PC-9 (cell line): ENCODE measurements at regions of chr1 and their contacts with region 1.

Region 1: DNA sequence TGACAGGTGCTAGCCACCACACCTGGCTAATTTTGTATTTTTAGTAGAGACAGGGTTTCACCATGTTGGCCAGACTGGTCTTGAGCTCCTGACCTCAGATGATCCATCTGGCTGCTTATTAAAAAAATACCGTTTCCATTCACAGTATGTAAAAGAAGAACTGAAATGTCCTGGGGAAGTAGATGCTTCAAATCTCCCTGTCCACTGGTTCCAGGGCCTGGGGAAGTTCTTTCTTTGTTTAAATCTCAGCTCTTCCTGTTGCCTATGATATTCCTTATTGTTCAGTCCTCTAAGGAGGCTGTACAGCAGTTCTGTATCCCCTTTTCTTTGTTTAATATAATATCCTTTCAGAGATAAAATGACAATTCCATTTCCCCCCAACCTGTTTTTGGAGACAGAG is 47.4 kb downstream of the ZMYM1 start:
- DNase-seq: no peak
- H3K4me3 ChIP-seq: no peak overlapping the region
- H3K27ac ChIP-seq: no peak overlapping the region
- H3K4me1 ChIP-seq: no peaks in the 10 kb centered on the region
- H3K27me3 ChIP-seq: no peaks in the 10 kb centered on the region
- CTCF ChIP-seq: no peak

Region 2: GRCh38 chr1:34833711-34834110 is 292.8 kb before region 1 on chr1:
- CTCF ChIA-PET with region 1: no interaction called
- POLR2A ChIA-PET with region 1: interaction called, 25 read pairs
- intact Hi-C with region 1: no loop called
- DNase-seq: no peak
- H3K4me3 ChIP-seq: no peak overlapping the region
- H3K27ac ChIP-seq: no peak overlapping the region
- H3K4me1 ChIP-seq: no peaks in the 10 kb centered on the region
- H3K27me3 ChIP-seq: no peaks in the 10 kb centered on the region
- CTCF ChIP-seq: no peak